ENCODE measurements at regions of chr2 and their contacts with region 1.

Region 1: GRCh38 chr2:62456721-62457539 is 49.1 kb downstream of the TMEM17 start:
- DNase-seq: peak; percentile 77 to 93
- ATAC-seq: peak; percentile 95
- H3K4me3 ChIP-seq: peak overlapping the region; percentile 12 to 50
- H3K27ac ChIP-seq: no peak overlapping the region
- H3K4me1 ChIP-seq: no peaks in the 10 kb centered on the region
- H3K27me3 ChIP-seq: no peaks in the 10 kb centered on the region

Region 2: DNA sequence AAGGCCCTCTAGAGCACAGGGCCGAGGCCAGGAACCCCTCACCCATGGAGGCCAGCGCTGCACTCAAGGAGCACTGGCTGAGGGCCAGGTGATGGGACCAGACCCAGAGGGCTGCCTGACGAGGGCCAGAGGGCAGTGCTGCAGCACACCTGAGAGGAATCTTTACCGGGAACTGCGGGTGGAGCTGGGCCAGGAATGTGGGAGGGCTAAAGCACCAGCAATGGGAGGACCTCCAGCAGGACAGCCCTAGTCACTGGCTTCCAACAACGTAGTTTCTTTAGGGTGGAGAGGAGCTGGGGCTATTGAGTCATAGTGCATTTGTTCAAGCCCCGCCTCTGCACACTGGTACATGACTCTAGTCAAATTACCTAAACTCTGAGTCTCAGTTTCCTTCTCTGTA is 94.4 kb before region 1 on chr2:
- intact Hi-C with region 1: no loop called
- DNase-seq: no peak
- ATAC-seq: no peak
- H3K4me3 ChIP-seq: no peak overlapping the region
- H3K27ac ChIP-seq: no peak overlapping the region
- H3K4me1 ChIP-seq: no peaks in the 10 kb centered on the region
- H3K27me3 ChIP-seq: no peaks in the 10 kb centered on the region

Region 3: DNA sequence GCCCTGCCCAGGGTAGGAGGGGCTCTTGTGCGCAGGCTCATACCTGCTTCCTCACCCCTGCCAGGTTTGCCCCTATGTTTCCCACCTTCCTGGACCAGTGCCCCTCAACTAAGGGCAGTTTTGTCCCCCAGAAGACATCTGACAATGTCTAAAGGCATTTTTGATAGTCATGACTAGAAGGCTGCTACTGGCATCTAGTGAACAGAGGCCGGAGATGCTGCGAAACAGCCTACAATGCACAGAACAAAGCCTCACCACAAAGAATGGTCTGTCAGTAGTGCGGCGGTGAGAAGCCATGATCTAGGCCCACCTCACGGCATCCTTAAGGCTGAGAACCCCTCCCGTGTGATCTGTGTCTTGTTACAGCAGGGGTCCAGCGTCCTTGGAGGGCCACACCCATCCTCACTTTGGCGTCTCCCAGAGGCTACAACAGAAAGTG is 46.9 kb before region 1 on chr2:
- intact Hi-C with region 1: no loop called
- DNase-seq: no peak
- ATAC-seq: no peak
- H3K4me3 ChIP-seq: no peak overlapping the region
- H3K27ac ChIP-seq: no peak overlapping the region
- H3K4me1 ChIP-seq: no peaks in the 10 kb centered on the region
- H3K27me3 ChIP-seq: no peaks in the 10 kb centered on the region

Region 4: DNA sequence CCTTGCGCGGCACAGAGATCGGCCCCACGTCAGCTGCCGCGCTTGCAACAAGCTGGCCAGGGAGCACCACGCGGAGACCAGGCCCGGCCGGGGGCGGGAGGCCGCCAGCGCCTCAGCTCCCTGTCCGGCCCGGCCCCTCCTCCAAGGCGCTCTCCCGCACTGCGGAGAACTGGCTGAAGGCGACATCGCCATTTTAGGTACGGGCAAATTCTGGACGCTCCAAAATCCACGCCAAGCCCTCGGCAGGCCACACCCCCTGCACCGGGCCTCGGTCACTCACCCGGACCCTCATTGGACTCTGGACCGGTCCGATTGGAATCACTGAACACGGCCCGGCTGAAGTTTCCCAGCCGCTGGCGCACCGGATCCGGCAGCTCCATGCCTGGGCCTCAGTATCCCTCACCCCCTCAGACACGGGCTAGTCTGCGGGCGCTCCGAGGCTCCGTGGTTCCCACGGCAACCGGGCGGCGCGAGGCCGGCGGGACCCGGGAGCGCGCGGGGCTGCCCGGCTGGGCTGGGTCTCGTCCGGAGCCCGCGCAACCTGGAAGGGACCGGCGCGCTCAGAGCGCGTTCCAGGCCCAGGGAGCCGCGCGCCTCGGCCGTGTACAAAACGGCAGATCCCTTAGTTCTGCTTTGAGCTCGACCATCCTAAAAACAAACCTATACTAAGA is 49.0 kb after region 1 on chr2 and contains the start of gene TMEM17:
- intact Hi-C with region 1: no loop called
- DNase-seq: peak; percentile 95 to 97
- ATAC-seq: peak; percentile 98
- H3K4me3 ChIP-seq: peak within 1 kb of the TSS; percentile 53 to 55
- H3K27ac ChIP-seq: peak within 1 kb of the TSS; percentile 68 to 71
- H3K4me1 ChIP-seq: no peaks in the 10 kb centered on the region
- H3K27me3 ChIP-seq: no peaks in the 10 kb centered on the region
- total RNA-seq, gene TMEM17: 1.1 TPM

Region 5: DNA sequence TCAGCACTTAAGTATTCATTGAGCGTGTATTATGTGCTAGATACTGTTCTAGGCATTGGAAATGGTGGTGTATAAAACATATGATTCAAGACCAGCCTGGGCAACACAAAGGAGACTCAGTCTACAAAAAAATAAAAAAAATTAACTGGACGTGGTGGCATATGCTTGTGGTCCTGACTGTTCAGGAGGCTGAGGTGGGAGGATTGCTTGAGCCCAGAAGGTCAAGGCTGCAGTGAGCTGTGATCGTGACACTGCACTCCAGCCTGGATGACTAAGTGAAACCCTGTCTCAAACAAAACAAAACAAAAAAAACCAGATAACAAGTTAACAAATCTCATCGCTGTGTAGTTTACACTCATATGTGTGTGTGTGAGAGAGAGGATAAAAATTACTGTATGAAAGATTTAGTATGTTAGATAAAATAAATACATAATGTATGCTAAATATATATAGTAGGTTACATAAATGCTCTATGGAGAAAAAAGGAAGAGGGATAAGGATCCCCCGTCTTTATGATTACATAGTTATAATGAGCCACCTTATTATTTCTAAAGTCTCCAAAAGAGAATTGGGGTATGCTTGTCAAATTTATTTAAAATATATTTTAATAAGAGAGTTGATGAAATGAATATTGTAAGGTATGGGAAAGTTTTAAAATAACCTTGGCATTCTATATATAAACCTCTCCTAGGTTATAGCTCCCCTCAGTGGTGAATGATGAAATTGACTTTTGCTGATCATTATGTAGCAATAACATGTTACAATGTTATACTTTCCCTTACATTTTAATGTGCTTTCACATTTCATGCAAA is 317.8 kb after region 1 on chr2:
- intact Hi-C with region 1: loop called (anchors 1 to 2 kb)
- DNase-seq: no peak
- ATAC-seq: peak; percentile 85
- H3K4me3 ChIP-seq: no peak overlapping the region
- H3K27ac ChIP-seq: no peak overlapping the region
- H3K4me1 ChIP-seq: no peaks in the 10 kb centered on the region
- H3K27me3 ChIP-seq: no peaks in the 10 kb centered on the region

Measured in aorta (tissue), 5 donors.